B cell (primary cell): ENCODE measurements at regions of chr2 and their contacts with region 1.

Region 1: GRCh38 chr2:55617175-55618024 is at the start of gene PPP4R3B:
- DNase-seq: peak; percentile 99
- ATAC-seq: peak; percentile 84
- H3K4me3 ChIP-seq: peak within 1 kb of the TSS; percentile 94 to 99 (median 96)
- H3K4me3 Mint-ChIP-seq: no peak within 1 kb of the TSS
- H3K27ac ChIP-seq: peak within 1 kb of the TSS; percentile 96 to 98
- H3K27ac Mint-ChIP-seq: no peak within 1 kb of the TSS
- H3K4me1 ChIP-seq: peaks cover 42 to 46% of the 10 kb centered on the region in 2 donors
- H3K4me1 Mint-ChIP-seq: peaks cover 47% of the 10 kb centered on the region
- H3K27me3 ChIP-seq: no peaks in the 10 kb centered on the region
- H3K27me3 Mint-ChIP-seq: no peaks in the 10 kb centered on the region
- CTCF ChIP-seq: peak; percentile 36
- total RNA-seq, gene PPP4R3B: 89.1 and 93.8 TPM in 2 replicates

Region 2: GRCh38 chr2:53786705-53787612 is 1830.4 kb before region 1 on chr2 and contains the starts of genes ASB3 and ERLEC1:
- CTCF ChIA-PET with region 1: no interaction called
- POLR2A ChIA-PET with region 1: no interaction called
- intact Hi-C with region 1: loop called (anchors 1 kb)
- DNase-seq: peak; percentile 92
- ATAC-seq: peak; percentile 92
- H3K4me3 ChIP-seq: peak within 1 kb of the TSS; percentile 77 to 98 (median 93)
- H3K4me3 Mint-ChIP-seq: peak within 1 kb of the TSS; percentile 98
- H3K27ac ChIP-seq: peak within 1 kb of the TSS; percentile 80 to 88
- H3K27ac Mint-ChIP-seq: peak within 1 kb of the TSS; percentile 92
- H3K4me1 ChIP-seq: peaks cover 29 to 33% of the 10 kb centered on the region in 2 donors
- H3K4me1 Mint-ChIP-seq: peaks cover 57% of the 10 kb centered on the region
- H3K27me3 ChIP-seq: no peaks in the 10 kb centered on the region
- H3K27me3 Mint-ChIP-seq: no peaks in the 10 kb centered on the region
- CTCF ChIP-seq: no peak
- total RNA-seq, gene ASB3: 30.7 and 38.4 TPM in 2 replicates
- total RNA-seq, gene ERLEC1: 22.9 and 24.5 TPM in 2 replicates

Region 3: DNA sequence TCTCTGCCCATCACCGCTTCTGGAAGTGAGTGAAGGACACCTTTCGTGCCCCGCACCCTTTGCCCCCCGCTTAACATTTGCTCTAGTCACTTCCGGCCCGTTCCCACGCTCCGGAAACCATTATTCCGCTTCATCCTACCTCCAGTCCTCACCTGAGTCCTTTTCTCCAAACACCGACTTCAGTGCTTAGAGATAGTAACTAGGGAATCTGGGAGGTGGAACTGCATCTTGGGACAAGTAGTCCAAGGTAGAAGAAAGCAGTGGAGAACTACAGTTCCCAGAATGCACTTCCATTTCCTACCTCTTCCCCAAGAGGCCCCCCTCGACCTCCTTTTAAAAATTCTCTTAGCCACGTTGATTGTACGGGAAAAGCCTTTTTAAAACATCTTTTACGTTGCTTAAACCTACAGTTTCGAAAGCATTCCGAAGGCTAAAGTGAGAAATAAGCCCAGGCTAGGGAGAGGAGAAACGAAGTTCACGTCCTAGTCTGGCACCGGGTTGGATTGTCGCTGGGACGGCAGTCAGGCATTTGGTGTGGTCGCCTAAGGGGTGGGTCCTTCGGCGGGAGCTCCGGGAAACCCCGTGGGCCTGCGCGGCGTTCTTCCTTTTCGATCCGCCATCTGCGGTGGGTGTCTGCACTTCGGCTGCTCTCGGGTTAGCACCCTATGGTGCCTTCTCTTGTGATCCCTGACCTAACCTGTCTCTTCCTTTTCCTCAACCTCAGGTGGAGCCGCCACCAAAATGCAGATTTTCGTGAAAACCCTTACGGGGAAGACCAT is 385.1 kb before region 1 on chr2 and contains the starts of genes CLHC1 and RPS27A:
- CTCF ChIA-PET with region 1: no interaction called
- POLR2A ChIA-PET with region 1: no interaction called
- intact Hi-C with region 1: loop called (anchors 2 kb)
- DNase-seq: peak; percentile 97
- ATAC-seq: peak; percentile 87
- H3K4me3 ChIP-seq: peak within 1 kb of the TSS; percentile 72 to 98 (median 94)
- H3K4me3 Mint-ChIP-seq: peak within 1 kb of the TSS; percentile 94
- H3K27ac ChIP-seq: peak within 1 kb of the TSS; percentile 95 to 98
- H3K27ac Mint-ChIP-seq: peak within 1 kb of the TSS; percentile 99
- H3K4me1 ChIP-seq: peaks cover 28 to 39% of the 10 kb centered on the region in 2 donors
- H3K4me1 Mint-ChIP-seq: peaks cover 54% of the 10 kb centered on the region
- H3K27me3 ChIP-seq: no peaks in the 10 kb centered on the region
- H3K27me3 Mint-ChIP-seq: no peaks in the 10 kb centered on the region
- CTCF ChIP-seq: no peak
- total RNA-seq, gene CLHC1: 12.0 and 12.8 TPM in 2 replicates
- total RNA-seq, gene RPS27A: 1,561 and 1,678 TPM in 2 replicates

Region 4: GRCh38 chr2:55419679-55420438 is 197.5 kb before region 1 on chr2 and contains the start of gene CCDC88A:
- CTCF ChIA-PET with region 1: no interaction called
- POLR2A ChIA-PET with region 1: no interaction called
- intact Hi-C with region 1: loop called (anchors 5 kb)
- DNase-seq: peak; percentile 95
- ATAC-seq: peak; percentile 85
- H3K4me3 ChIP-seq: peak within 1 kb of the TSS; percentile 65 to 91 (median 82)
- H3K4me3 Mint-ChIP-seq: peak within 1 kb of the TSS; percentile 95
- H3K27ac ChIP-seq: peak within 1 kb of the TSS; percentile 68 to 73
- H3K27ac Mint-ChIP-seq: peak within 1 kb of the TSS; percentile 95
- H3K4me1 ChIP-seq: peaks cover 20 to 25% of the 10 kb centered on the region in 2 donors
- H3K4me1 Mint-ChIP-seq: peaks cover 38% of the 10 kb centered on the region
- H3K27me3 ChIP-seq: peaks cover 0 to 4% (median 0%) of the 10 kb centered on the region in 4 experiments
- H3K27me3 Mint-ChIP-seq: no peaks in the 10 kb centered on the region
- CTCF ChIP-seq: no peak
- total RNA-seq, gene CCDC88A: 26.0 and 27.6 TPM in 2 replicates